GM10248 (cell line): ENCODE measurements at regions of chr14 and their contacts with region 1.

Region 1: DNA sequence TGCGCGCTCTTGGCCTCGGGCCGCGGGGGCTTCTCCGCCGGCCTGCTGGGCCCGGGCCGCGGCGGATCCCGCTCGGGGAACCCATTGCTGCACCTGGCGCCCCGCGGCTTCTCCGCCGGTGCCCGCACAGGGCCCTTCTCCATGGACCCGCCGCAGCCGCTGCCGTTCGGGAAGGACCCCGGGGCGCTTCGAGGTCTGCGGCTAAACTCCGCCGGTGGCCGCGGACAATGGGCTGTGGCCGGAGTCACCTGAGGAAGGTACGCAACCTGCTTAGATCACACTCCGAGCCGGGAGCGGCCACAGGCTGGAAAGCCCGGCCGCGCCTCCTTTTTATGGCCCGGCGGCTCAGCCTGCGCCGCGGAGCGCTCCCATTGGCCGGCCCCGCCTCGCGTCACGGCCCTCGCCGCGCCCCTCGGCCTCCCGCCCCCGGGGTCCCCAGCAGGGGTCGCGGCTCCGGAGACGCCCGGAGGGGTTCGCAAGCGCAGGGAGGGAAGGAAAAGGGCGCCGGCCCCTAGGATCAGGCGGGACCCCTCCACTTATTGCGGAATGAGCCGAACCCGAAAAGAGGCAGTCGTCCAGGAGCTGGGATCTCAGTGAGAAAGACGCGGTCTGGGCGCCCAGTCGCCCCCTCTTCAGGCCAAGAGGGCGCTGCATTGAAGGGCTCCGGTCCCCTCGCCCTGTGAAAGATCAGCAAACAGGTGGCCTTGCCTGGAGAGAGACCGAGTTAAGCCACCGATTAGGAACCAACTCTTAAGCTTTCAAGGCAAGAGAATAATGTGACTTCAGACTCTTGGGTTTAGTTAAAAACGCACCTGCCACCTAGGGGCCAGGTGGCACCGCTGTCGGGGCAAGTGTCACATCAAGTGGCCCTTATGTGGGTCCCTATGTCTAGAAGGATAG is at the start of gene GCH1:
- DNase-seq: peak; percentile 88
- CTCF ChIP-seq: peak; percentile 30

Region 2: DNA sequence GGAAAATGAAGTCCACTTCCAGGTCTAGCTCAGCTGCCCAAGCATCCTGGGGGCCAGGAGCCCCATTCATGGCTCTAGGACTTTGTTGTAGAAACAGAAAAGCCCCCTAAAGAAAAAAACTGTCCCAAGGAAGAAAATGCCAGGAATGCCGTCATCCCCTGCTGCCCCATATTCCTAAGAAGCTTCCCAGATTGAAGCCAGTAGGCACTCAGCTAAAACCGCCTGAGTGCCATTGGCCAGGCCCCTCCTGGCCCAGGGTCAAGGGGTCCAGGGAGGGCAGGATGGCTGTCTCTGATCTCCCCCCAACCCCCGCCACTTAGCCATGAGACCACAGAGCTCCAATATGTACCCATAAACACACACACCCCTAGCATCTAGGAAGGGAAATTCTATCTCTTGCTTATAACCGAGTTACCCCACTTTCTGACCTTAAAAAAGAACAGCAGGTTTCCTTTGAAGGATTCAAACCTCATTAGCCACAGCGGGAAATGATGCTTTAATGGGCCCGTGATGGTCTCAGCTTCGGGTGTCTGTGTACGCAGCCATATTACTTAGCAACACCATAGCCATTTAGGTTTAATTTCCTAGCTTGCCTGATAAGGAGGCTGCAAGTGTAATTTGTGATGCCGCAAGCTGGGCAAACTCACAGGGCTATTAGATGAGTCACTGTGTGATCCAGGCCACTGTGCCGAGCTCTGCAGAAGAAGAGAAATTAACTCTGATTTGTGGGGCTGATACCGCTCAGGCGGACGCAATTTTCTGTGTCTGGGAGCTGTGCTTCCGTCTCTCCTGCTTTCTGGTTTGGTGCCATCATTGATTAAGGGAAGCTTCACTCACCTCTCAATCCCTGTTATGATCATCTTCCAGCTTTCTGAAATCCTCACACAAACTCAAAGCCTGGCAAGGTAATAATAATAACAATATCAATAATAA is 84.3 kb before region 1 on chr14:
- CTCF ChIA-PET with region 1: no interaction called
- POLR2A ChIA-PET with region 1: no interaction called
- DNase-seq: no peak
- CTCF ChIP-seq: no peak

Region 3: GRCh38 chr14:54916101-54916500 is 13.3 kb after region 1 on chr14:
- CTCF ChIA-PET with region 1: interaction called, 11 read pairs
- POLR2A ChIA-PET with region 1: interaction called, 3 read pairs
- DNase-seq: no peak
- CTCF ChIP-seq: no peak